Adrenal gland (tissue), 19 donors: ENCODE measurements at regions of chr20 and their contacts with region 1.

Region 1: DNA sequence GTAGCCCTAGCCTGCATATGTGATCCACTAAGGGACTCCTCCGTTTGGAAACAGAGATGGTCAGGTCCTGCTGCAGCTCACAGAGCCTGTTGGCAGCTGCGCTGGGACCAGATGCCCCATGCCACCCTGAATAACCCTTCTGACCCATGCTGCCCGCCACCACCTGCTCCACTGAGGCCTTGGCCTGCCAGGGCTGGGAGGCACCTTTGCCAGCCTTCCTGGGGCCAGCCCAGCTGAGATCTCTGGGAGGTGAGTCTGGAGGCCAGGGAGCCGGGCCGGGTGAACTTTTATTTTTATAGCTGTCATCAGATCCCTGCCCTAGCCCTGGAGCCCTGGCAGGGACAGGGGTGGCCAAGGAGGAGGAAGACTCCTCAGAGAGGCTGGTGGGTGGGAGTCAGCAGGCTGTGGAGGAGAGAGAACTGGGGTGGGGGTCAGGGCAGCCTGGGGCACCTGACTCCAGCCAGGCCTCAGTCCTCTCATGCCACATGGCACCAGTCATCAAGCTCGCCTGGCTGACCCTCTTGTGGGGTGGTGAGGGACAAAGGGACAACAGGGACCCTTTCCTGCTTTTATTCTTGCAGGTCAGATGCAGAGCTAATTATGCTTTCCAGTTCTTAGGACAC is 10.0 kb downstream of the CEBPB start:
- DNase-seq: no peak
- H3K4me3 ChIP-seq: no peak overlapping the region
- H3K27ac ChIP-seq: no peak overlapping the region
- H3K4me1 ChIP-seq: no peaks in the 10 kb centered on the region
- H3K27me3 ChIP-seq: no peaks in the 10 kb centered on the region
- CTCF ChIP-seq: no peak
- POLR2A ChIP-seq: no peak

Region 2: GRCh38 chr20:50353289-50353961 is 152.8 kb after region 1 on chr20:
- intact Hi-C with region 1: loop called in 1 of 2 experiments (anchors 10 kb)
- DNase-seq: peak in 1 of 7 donors; percentile 35
- H3K4me3 ChIP-seq: no peak overlapping the region
- H3K27ac ChIP-seq: peak overlapping the region in 1 of 5 donors; percentile 0
- H3K4me1 ChIP-seq: no peaks in the 10 kb centered on the region
- H3K27me3 ChIP-seq: no peaks in the 10 kb centered on the region
- CTCF ChIP-seq: no peak
- POLR2A ChIP-seq: no peak